Activated T-helper 1 cell treated with anti-CD3 and anti-CD28 coated beads, Interleukin-12 subunit alpha, Interleukin-12 subunit beta, Interleukin-2, Interleukin-4 antibody, amounts not matched to agents 30 ng/mL and 10 ng/mL and 1 ng/mL, durations not matched to agents 14 hours and 24 hours and 36 hours (primary cell): ENCODE measurements at regions of chr19 and their contacts with region 1.

Region 1: DNA sequence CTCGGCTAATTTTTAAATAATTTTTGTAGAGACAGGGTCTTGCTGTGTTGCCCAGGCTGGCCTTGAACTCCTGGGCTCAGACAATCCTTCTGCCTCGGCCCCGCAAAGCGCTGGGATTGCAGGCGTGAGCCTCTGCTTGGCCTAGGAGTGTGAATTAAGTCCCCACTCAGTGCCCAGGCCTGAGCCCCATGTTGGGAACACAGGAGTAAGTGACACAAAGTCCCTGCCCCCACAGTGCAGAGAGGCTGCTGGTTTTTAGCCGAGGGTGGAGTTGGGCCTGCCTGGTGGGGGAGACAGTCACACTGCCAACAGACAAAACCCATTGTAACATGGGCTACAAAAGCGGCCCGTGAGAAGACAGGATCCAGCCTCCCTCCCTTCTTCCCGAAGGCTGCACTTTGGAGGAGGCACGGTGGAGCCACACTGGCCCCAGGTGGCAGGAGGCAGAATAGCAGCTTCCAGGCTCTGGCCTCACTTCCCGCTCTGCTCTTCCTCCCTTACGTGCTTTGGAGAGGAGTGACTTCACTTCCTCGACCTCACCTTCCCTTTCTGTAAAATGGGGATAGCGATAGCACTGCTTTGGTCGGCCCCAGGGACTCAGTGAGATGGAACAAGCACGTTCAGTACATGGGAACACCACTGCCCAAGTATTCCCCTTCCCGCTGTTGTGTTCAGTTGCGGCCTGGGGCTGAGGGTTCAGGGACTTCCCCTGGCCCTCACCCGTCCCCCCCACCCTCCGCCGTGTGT is 15.2 kb upstream of the EHD2 start:
- DNase-seq: peak; percentile 38
- H3K4me3 Mint-ChIP-seq: no peak overlapping the region
- H3K27ac Mint-ChIP-seq: peak overlapping the region; percentile 23
- H3K4me1 Mint-ChIP-seq: no peaks in the 10 kb centered on the region
- H3K27me3 Mint-ChIP-seq: no peaks in the 10 kb centered on the region

Region 2: DNA sequence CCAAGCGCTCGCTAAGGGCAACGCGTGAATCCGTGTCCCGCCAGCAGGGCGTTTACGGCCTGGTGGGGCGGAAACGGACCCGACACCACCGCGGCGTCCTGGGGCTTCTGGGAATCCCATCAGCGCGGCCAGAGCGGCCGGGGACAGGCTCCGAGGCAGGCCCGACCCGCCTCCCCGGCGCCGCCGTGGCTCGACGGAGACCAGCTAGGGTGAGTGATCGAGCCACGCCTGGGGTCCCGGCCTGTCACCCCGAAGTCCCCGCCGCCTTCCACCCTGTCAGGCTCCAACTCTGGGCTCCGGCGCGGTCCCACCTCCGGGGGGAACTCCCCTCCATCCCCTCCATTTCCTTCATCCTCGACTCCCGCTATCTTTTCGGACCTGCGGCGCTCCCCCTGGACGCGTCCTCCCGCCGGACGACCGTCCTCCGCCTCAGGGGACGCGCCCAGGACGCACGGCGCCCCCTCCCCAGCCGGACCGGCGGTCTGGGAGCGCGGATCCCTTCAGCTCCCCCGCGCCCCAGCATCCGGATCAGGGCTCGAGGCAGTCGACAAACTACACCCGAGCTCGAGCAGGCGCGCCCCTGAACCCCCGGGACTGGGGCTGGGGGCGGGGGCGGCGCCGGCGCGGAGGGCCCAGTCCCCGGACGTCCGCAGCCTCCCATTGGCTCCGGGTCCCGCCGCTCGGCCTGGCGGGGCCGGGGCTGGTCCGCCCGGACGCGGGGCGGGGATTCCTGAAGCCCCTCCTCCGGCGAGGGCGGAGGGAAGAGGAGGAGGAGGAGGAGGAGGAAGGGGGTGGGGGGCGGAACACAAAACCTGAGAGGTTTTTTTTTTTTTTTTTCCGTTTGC is 89.7 kb before region 1 on chr19:
- intact Hi-C with region 1: loop called (anchors 2 kb)
- DNase-seq: peak; percentile 97
- H3K4me3 Mint-ChIP-seq: peak overlapping the region; percentile 87
- H3K27ac Mint-ChIP-seq: peak overlapping the region; percentile 62
- H3K4me1 Mint-ChIP-seq: peaks cover 23% of the 10 kb centered on the region
- H3K27me3 Mint-ChIP-seq: no peaks in the 10 kb centered on the region